ENCODE measurements at regions of chr17 and their contacts with region 1.

Region 1: DNA sequence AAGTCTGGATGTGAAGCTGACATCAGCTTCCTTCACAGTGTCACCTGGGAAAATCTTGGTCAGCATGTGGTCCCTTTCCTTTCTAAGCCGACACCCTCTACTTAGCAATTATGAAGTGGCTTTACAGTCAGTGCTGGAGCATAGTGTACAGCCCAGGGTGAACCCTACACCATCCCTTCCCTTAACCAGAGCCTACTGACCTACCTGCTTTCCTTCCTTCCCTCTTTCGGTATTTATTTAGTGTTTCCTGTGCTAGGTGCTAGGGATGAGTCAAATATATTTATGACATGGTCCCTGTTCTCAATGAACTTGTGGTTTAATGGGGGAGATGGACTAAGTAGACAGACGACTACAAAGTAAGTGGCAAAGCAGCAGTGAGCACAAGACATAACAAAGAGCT is 77.5 kb downstream of the CDK5R1 start:
- DNase-seq: peak; percentile 66
- H3K4me3 Mint-ChIP-seq: no peak overlapping the region
- H3K27ac Mint-ChIP-seq: peak overlapping the region; percentile 16
- H3K4me1 Mint-ChIP-seq: peaks cover 25% of the 10 kb centered on the region
- H3K27me3 Mint-ChIP-seq: no peaks in the 10 kb centered on the region

Region 2: DNA sequence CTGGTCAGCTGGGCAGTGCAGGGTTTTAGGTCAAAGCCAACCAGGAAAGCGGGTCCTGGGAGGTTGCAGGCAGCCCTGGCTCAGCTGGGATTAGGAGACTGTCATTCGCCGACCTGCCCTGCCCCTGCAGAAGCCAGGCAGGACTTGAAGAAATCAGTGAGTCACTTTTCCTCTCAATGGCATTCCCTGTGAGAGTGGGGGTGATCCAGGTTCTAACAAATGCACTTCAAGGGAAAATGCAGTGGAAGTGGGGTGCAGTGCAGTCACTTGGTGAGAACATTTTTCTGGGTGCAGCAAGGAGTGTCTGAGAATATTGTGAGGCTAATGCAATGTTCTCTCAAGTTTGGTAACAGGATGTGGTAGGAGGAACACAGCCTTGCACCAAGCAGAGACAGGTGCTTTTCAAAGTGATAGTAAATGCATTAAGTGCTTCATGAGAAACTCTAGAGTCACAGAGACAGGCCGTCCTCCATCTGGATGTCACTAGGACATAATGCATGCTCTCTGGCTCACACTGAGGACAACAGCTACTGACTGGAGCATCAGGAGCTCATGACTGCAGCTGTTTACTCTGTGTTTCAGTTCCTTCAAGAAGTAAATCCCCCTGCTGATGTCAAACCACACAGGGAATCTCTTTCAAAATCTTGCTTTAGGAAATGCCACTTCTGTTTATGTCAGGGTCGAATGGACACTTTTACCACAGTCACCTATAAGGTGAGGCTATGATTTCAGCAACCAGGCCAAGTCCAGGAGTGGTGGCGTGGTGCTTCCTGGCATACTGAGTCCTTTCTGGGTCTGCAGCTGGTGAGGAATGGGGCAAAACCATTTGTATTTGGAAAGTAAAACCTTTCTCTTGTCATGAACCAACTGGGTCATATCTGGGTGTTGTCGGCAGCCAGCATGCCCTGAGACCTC is 60.8 kb before region 1 on chr17:
- CTCF ChIA-PET with region 1: interaction called, 3 read pairs
- intact Hi-C with region 1: loop called (anchors 1 kb)
- DNase-seq: peak; percentile 83
- H3K4me3 Mint-ChIP-seq: peak overlapping the region; percentile 47
- H3K27ac Mint-ChIP-seq: peak overlapping the region; percentile 97
- H3K4me1 Mint-ChIP-seq: peaks cover 76% of the 10 kb centered on the region
- H3K27me3 Mint-ChIP-seq: no peaks in the 10 kb centered on the region

Region 3: DNA sequence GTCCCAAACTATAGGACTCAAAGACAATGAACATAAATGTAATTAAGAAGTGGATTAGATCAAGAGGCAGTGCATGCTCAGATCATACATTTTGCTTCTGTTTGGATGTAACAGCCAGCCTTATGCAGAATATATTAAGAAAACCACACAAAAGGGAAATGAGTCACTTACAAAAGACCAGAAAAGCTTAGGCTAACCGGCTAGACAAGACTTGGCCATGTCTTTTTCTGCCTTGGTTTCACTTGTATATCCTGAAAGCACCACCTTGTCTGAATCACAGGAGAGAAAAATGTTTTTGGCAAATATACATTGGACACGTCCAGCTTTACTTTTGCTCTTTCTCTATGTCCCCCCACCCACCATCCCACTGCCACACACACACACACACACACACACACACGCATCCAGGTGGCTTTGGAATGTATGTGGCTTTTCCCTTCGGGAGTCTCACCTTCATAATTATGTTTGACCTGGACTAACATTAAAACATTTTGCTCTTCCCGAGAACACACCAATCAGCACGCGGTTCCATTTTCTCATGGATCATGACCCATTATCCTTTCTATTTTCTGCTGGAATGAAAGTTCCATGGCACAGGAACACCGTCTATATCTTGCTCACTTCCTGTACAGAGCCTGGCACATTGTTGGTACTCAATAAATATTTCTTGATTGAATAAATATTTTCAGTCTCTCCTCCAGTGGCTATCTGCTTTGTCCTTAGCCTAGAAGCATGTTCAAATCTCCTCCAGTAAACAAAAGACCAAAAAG is 13.0 kb before region 1 on chr17:
- CTCF ChIA-PET with region 1: interaction called, 3 read pairs
- intact Hi-C with region 1: loop called (anchors 1 kb)
- DNase-seq: peak; percentile 22
- H3K4me3 Mint-ChIP-seq: no peak overlapping the region
- H3K27ac Mint-ChIP-seq: peak overlapping the region; percentile 46
- H3K4me1 Mint-ChIP-seq: peaks cover 48% of the 10 kb centered on the region
- H3K27me3 Mint-ChIP-seq: no peaks in the 10 kb centered on the region